ENCODE measurements at regions of chr1 and their contacts with region 1.

Region 1: DNA sequence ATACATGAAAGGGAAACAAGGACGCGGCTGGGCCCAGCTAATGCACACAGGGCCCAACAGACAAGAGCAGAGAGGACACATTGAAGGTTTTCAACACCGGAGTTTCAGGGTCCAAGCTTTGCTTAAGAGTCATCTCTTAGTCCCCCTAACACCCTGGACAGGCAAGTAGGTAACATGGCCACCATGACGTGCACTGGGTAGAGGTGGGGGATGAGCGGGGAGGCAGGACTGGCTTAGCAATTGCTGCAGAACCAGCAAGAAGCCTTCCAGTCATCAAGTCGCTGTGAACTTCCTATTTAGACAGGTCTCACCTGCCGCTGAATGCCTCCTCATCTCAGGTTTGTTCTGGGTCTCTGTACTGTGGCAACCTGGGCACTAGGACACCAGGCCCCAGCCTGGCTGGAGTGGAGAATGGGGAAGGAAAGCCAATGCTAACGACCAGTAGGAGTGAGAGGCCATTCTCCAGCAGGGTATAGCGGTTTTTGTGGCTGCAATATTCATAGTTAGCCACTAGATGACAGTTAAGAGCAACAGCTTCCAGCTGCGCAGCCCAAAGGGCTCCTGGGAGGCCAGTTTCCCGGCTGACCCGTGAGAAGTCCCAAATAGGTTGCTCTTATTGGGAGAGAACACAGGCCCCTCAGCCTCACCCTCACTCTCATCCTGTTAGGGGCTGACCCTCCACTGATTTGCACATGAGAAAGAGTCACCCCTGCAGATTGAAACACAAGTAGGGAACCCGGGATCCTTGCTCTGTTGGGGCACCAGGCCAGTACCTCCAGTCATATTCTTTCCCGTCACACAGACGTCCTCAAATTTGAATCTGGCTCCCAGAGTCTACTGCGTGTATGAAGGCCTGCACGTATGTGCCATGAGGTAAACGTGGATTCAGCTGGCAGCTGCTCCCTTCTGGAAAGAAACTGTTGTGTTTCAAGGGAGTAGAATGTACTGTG is 6.0 kb upstream of the PIGC start:
- H3K4me3 Mint-ChIP-seq: no peak overlapping the region
- H3K27ac Mint-ChIP-seq: peak overlapping the region; percentile 32
- H3K4me1 Mint-ChIP-seq: peaks cover 28% of the 10 kb centered on the region
- H3K27me3 Mint-ChIP-seq: no peaks in the 10 kb centered on the region

Region 2: GRCh38 chr1:172431721-172432192 is 18.1 kb before region 1 on chr1:
- intact Hi-C with region 1: no loop called
- H3K4me3 Mint-ChIP-seq: no peak overlapping the region
- H3K27ac Mint-ChIP-seq: no peak overlapping the region
- H3K4me1 Mint-ChIP-seq: no peaks in the 10 kb centered on the region
- H3K27me3 Mint-ChIP-seq: no peaks in the 10 kb centered on the region

Region 3: DNA sequence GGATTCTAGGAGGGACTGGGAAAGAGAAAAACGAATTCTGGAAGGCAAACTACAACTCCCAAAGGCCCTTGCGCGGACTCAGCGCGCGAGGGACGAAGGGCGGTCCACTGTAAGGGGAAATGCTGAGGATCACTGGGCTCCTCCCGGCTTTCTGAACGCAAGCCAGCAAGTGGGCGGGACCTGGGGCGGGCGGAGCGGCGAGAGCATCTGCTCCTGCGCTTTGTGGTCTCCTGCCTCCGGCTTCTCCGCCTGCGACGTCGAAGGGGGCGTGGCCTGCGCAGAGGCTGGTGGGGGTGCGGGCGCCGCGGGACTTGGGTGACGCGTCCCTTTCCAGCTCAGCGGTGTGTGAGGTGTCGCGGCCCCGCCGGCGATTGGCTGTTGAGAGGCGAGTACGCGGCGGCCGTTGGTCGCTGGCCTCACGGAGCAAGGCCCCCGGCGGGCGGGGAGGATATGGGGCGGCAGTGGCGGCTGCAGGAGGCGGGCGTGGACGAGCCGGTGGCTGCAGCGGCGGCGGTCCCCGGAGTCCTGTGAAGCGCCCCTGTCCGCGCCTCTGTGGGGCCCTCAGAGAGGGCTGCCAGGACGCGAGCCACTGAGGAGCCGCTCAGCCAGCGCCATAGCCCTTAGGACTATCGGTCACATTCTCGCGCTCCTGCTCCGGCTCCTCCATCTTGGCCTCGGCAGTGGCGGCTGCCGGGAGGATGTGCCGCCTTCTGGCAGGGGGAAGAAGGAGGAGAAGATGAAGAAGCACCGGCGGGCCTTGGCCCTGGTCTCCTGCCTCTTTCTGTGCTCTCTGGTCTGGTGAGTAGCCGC is 83.0 kb after region 1 on chr1 and contains the start of gene SUCO:
- intact Hi-C with region 1: loop called (anchors 1 kb)
- H3K4me3 Mint-ChIP-seq: peak within 1 kb of the TSS; percentile 93
- H3K27ac Mint-ChIP-seq: peak within 1 kb of the TSS; percentile 98
- H3K4me1 Mint-ChIP-seq: peaks cover 37% of the 10 kb centered on the region
- H3K27me3 Mint-ChIP-seq: no peaks in the 10 kb centered on the region

Region 4: GRCh38 chr1:172719694-172720138 is 269.9 kb after region 1 on chr1:
- intact Hi-C with region 1: loop called (anchors 5 kb)
- H3K4me3 Mint-ChIP-seq: no peak overlapping the region
- H3K27ac Mint-ChIP-seq: no peak overlapping the region
- H3K4me1 Mint-ChIP-seq: peaks cover 11% of the 10 kb centered on the region
- H3K27me3 Mint-ChIP-seq: no peaks in the 10 kb centered on the region

Region 5: GRCh38 chr1:172818841-172819527 is 369.1 kb after region 1 on chr1:
- intact Hi-C with region 1: no loop called
- H3K4me3 Mint-ChIP-seq: no peak overlapping the region
- H3K27ac Mint-ChIP-seq: peak overlapping the region; percentile 30
- H3K4me1 Mint-ChIP-seq: peaks cover 25% of the 10 kb centered on the region
- H3K27me3 Mint-ChIP-seq: peaks cover 3% of the 10 kb centered on the region

Measured in dendritic cell treated with granulocyte-macrophage colony-stimulating factor and Interleukin-4, amounts not matched to agents 40 ng/mL and 50 ng/mL, for 4 days (primary cell).